Heart left ventricle (tissue), 16 donors: ENCODE measurements at regions of chr1 and their contacts with region 1.

Region 1: DNA sequence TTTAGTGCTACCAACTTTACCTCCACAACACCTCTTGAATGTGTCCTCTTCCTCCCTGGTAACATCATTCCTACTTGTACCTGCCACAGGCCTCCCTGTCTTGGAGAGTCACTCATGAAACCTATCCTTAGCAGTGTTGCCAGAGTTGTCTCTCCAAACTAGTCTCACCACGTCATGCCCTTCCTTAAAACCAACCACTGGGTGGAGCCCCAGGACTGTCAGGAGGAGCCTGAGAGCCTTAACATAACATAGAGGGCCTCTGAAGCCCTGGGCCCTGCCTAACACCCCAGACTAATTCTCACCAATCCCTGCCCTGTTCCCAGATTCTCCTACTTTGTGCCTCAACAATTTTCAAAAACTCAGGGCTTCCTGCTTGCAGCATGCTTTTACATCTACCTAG is 65.3 kb downstream of the ZNF697 start:
- DNase-seq: peak; percentile 32 to 60 (median 53)
- ATAC-seq: peak; percentile 72 to 92 (median 90)
- H3K4me3 ChIP-seq: no peak overlapping the region
- H3K27ac ChIP-seq: no peak overlapping the region
- H3K4me1 ChIP-seq: peaks cover 0 to 8% (median 0%) of the 10 kb centered on the region in 12 donors
- H3K27me3 ChIP-seq: no peaks in the 10 kb centered on the region
- CTCF ChIP-seq: peak; percentile 22 to 61 (median 43)
- POLR2A ChIP-seq: no peak

Region 2: DNA sequence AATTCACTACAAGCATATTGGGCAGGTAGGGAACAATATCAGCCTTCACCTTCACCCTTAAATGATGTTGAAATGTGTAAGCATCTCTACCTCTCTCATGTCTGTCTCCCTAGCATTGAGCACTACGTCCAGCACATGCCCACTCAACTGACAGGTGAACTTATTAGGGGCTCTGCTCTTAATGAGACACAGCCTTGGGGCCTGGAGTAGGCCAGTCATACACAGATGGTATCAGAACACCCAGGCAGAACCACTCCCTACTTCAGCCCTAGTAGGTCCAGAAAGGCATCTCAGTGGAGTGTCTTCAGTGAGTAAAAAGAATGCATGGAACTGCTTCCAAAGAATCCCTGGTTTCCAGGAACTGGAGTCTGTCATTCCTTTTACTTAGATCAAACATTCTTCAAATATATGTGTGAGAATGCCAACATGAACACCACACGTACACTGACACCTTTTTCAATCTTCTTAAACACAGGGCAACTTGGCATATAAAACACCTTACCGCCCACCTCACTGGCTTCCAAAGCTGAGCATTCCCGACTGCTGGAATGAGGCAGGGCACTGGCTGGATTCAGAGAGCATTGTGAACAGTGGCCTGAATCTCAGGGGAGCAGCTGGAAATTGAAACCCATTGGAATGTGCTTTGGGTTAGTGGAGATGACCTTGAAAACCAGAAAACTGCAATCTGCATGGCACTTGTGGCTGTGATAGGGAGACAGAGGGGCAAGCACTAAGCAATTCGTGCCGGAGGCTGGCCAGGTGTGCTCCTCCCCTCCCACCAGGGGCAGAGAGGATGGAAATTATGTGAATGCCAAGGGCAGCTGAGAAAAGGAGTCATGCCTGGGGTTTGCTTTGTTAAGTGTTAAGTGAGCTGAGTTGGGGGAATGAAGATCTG is 100.0 kb before region 1 on chr1:
- intact Hi-C with region 1: loop called in 1 of 10 experiments (anchors 10 kb)
- DNase-seq: no peak
- ATAC-seq: no peak
- H3K4me3 ChIP-seq: no peak overlapping the region
- H3K27ac ChIP-seq: no peak overlapping the region
- H3K4me1 ChIP-seq: peaks cover 0 to 5% (median 0%) of the 10 kb centered on the region in 12 donors
- H3K27me3 ChIP-seq: no peaks in the 10 kb centered on the region
- CTCF ChIP-seq: no peak
- POLR2A ChIP-seq: no peak